Activated CD4-positive, alpha-beta T cell treated with anti-CD3 and anti-CD28 coated beads for 36 hours (primary cell): ENCODE measurements at regions of chr14 and their contacts with region 1.

Region 1: DNA sequence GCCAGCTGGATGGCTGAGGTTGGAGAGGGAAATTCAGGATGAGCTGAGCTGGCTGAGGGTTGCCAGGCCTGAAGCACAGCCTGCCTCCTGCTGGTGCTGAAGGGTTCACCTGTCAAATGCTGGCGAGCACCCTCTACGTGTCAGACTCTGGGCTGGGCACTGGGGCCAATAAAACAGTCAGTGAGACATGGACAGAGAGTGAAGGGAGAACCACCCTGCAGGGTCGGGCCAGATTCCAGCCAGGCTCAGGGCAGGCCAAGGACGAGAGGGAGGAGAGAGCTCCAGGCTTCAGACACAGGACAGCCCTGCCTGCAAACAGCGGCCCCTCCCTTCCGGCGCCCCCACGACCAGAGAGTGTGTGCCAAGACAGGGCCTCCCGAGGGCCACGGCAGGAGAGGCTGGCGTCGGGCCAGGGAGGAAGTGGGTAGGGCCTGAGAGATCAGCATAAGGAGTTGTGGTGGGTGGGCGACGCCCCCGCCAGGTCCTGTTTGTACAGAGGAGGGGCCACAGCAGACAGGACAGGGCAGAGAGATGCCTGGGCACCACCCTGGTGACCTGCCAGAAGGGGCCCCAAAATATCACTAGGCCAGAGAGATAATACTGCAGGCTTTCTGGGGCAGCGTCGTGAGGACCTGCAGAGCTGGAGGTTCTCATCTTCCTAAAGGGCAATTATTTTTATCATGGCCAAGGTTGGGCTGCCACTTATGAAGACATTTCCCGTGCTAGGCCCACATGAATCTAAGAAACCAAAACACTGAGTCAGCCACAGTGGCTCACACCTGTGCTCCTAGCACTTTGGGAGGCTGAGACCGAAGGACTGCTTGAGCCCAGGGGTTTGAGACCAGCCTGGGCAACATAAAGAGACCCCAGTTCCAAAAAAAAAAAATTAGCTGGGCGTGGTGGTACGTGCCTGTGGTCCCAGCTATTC is 73.1 kb upstream of the GPR68 start:
- DNase-seq: peak; percentile 93
- ATAC-seq: peak; percentile 60
- H3K4me3 Mint-ChIP-seq: peak overlapping the region; percentile 56
- H3K27ac Mint-ChIP-seq: peak overlapping the region; percentile 96
- H3K4me1 Mint-ChIP-seq: peaks cover 83% of the 10 kb centered on the region
- H3K27me3 Mint-ChIP-seq: no peaks in the 10 kb centered on the region

Region 2: GRCh38 chr14:91303091-91303923 is 14.3 kb before region 1 on chr14:
- CTCF ChIA-PET with region 1: interaction called, 5 read pairs
- POLR2A ChIA-PET with region 1: no interaction called
- intact Hi-C with region 1: loop called (anchors 1 to 2 kb)
- DNase-seq: peak; percentile 97
- ATAC-seq: peak; percentile 87
- H3K4me3 Mint-ChIP-seq: peak overlapping the region; percentile 66
- H3K27ac Mint-ChIP-seq: peak overlapping the region; percentile 97
- H3K4me1 Mint-ChIP-seq: peaks cover 63% of the 10 kb centered on the region
- H3K27me3 Mint-ChIP-seq: no peaks in the 10 kb centered on the region

Region 3: GRCh38 chr14:92039719-92040430 is 722.2 kb after region 1 on chr14 and contains the start of gene TRIP11:
- CTCF ChIA-PET with region 1: no interaction called
- POLR2A ChIA-PET with region 1: no interaction called
- intact Hi-C with region 1: loop called in 1 of 2 experiments (anchors 5 kb)
- DNase-seq: peak; percentile 98
- ATAC-seq: peak; percentile 95
- H3K4me3 Mint-ChIP-seq: peak within 1 kb of the TSS; percentile 92
- H3K27ac Mint-ChIP-seq: peak within 1 kb of the TSS; percentile 98
- H3K4me1 Mint-ChIP-seq: peaks cover 42% of the 10 kb centered on the region
- H3K27me3 Mint-ChIP-seq: no peaks in the 10 kb centered on the region
- total RNA-seq, gene TRIP11: 35.7 to 41.0 TPM